Prostate gland (tissue), 2 donors: ENCODE measurements at regions of chr4 and their contacts with region 1.

Region 1: DNA sequence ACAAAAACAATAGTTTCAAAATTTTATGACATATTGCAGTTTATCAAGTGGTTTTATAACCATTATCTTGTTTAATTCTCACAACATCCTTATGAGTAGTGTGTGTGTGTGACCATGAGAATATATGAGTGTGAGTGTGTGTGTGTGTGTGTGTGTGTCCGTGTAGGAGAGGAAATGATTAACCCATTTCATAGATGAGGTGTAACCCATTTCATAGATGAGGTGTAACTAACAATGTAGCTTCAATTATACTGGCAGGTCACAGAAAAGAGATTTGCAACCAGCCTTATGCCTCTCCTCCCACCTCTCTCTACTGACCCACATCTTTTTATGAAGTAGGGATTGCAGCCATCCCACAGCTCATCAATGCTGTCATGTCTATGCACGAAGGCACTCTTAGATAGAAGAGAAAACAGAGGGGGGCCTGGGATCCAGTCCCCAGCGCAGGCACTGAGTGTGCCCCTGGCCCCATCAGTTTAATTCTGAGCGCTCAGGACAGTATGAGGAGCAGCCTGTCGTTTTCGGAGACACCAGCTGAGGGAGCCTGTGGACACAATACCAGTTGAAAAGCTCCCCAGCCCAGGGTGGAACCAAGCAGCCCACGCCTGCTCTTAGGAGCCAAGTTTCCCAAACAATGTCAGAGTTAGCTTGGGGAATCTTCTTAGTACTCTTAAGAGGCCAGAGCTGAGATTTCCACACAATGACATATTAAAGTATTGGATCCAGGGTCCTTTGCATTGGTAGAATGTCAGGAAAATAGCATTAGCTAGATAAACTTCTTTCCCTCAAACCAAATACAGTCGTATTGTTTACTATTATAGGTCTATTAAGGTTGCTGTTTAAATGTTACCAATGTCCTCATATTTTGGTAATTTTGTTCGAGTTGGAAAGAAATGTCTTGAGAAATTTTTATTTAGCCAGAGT is 88.6 kb downstream of the PALLD start:
- DNase-seq: peak; percentile 70
- H3K4me3 ChIP-seq: no peak overlapping the region
- H3K27ac ChIP-seq: no peak overlapping the region
- H3K4me1 ChIP-seq: no peaks in the 10 kb centered on the region
- H3K27me3 ChIP-seq: no peaks in the 10 kb centered on the region
- CTCF ChIP-seq: peak; percentile 38 to 73 (median 55)
- POLR2A ChIP-seq: no peak

Region 2: GRCh38 chr4:168631241-168632162 is 46.1 kb after region 1 on chr4:
- intact Hi-C with region 1: loop called (anchors 2 kb)
- DNase-seq: peak; percentile 34
- H3K4me3 ChIP-seq: peak overlapping the region; percentile 24 to 35
- H3K27ac ChIP-seq: peak overlapping the region; percentile 52 to 57
- H3K4me1 ChIP-seq: no peaks in the 10 kb centered on the region
- H3K27me3 ChIP-seq: no peaks in the 10 kb centered on the region
- CTCF ChIP-seq: peak in 2 of 4 experiments; percentile 36 to 48
- POLR2A ChIP-seq: no peak

Region 3: GRCh38 chr4:168710353-168710946 is 125.0 kb after region 1 on chr4:
- intact Hi-C with region 1: loop called (anchors 5 kb)
- DNase-seq: peak; percentile 46
- H3K4me3 ChIP-seq: no peak overlapping the region
- H3K27ac ChIP-seq: peak overlapping the region; percentile 9 to 58
- H3K4me1 ChIP-seq: no peaks in the 10 kb centered on the region
- H3K27me3 ChIP-seq: no peaks in the 10 kb centered on the region
- CTCF ChIP-seq: peak in 3 of 4 experiments; percentile 39 to 66 (median 61)
- POLR2A ChIP-seq: no peak

Region 4: DNA sequence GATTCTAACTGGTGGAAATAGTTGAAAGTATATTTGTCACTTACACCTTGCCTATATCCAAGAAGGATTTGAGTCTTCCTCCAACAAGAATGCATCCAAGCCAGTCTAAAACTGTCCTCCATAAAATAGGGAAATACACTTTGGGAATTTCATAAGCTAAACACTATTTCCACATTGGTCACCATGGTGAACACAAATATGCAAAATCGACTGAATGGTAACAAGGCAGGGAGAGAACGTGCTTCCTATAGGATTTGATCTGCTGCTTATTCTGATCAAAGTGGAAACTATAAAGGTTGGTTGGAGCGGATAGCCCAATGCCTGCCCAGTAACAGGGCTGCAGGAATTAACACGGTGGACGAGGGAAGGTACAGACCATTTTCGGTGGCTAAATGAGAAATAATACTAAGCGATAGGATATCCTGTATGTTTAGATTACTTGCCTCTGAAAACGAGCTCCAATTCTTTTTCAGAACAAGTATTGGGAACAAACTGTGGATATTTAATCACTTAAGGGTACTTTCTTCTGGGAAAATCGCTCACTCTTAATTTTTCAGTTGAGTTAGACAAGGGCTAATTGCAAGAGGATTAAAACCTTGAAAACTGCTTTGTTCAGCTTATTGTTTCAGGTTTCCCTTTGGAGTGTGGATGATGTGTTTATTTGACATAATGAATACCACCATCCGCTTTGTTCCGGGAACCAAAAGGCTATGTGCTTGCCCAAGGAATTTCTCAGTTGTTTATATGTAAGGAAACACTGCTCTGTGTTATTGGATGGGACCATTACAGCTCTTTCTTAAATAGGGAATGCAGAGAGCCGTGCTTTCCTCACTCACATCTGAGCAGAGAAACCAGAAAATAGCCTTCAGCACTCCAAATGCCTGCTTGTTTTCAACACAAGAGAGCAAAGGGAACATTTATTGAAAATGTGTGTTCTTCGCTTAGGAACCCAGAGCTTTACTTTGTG is 230.2 kb after region 1 on chr4:
- intact Hi-C with region 1: loop called (anchors 5 kb)
- DNase-seq: peak; percentile 56
- H3K4me3 ChIP-seq: no peak overlapping the region
- H3K27ac ChIP-seq: peak overlapping the region; percentile 83 to 86
- H3K4me1 ChIP-seq: no peaks in the 10 kb centered on the region
- H3K27me3 ChIP-seq: no peaks in the 10 kb centered on the region
- CTCF ChIP-seq: no peak
- POLR2A ChIP-seq: no peak

Region 5: DNA sequence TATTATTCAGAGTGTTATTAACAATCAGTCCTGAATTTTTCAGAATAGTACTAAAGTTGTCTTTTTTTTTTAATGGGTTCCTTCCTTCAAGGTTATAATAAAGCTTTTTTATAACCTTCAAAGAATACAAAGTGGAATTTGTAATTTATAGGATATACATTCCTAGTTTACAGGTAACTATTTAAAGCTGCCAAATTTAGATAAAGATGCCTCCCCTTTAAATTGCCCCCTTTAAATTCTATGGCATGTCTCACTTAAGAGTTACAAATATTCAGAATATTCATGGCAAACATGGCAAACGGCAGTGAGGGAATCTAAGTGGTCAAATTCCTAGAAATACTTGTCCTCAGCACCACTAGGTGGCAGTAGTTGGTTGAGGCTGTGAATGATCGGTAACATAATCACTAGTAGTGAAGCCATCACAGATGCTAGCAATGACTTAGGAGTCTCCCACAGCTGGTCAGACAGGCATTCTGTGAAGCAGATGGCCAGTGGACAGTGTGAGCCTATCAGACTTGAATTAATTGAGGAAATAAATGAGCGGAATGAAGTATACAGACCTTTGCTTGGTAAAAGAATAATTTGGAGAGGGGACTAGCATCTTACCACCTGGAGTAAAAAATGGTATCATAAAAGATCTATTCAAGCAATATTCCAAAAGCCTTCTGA is 338.2 kb after region 1 on chr4:
- intact Hi-C with region 1: loop called (anchors 5 kb)
- DNase-seq: peak; percentile 55
- H3K4me3 ChIP-seq: no peak overlapping the region
- H3K27ac ChIP-seq: no peak overlapping the region
- H3K4me1 ChIP-seq: no peaks in the 10 kb centered on the region
- H3K27me3 ChIP-seq: no peaks in the 10 kb centered on the region
- CTCF ChIP-seq: peak; percentile 45 to 80 (median 72)
- POLR2A ChIP-seq: no peak

Region 6: DNA sequence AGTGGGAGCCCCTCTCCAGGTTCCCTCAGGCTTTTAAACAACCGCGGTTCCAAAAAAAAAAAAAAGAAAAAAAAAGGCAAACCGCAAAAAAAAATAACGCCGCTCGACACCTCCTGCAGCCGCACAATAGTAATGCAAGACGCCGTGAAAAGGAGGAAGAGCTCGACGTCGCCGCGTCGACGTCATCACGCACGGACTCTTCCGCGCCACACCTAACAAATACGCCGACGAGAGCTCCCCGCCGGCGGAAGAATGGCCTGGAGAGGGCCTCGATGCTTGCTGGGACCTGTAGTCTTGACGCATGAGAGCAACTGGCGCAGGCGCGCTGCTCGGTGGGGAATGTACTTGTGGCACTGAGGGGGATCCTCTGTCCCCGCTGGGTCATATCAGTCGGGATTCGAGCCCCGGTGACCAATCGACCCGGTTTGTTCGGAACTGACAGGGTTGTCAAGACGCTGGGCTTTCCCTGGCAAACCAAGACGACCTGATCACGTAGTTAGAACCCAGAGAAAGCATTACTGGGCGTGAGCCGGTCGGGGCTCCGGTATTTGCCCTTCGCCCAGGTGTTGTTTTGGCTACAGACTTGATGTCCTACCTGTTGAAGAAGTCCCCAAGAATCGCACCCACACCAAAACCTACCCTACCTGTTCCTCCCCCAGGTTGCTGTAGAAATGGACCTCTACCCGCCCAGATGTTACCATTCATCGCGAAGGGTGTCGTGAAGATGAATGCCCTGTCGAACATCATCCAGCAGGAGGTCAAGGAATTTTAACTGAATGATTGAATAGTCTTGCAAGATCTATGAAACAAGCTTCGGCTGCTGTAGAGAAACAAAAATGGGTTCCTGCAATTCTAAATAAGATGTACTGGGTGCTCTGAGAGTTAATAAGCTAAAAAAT is 424.9 kb after region 1 on chr4 and contains the start of gene CBR4:
- intact Hi-C with region 1: loop called (anchors 10 kb)
- DNase-seq: peak; percentile 98
- H3K4me3 ChIP-seq: peak within 1 kb of the TSS; percentile 60 to 64
- H3K27ac ChIP-seq: peak within 1 kb of the TSS; percentile 89 to 90
- H3K4me1 ChIP-seq: no peaks in the 10 kb centered on the region
- H3K27me3 ChIP-seq: no peaks in the 10 kb centered on the region
- CTCF ChIP-seq: peak in 2 of 4 experiments; percentile 36 to 52
- POLR2A ChIP-seq: peak; percentile 72
- total RNA-seq, gene CBR4: 15.6 to 23.7 TPM